Activated T-helper 2 cell treated with anti-CD3 and anti-CD28 coated beads, Interferon-gamma antibody, Interleukin-2, Interleukin-4, amounts not matched to agents 10 μg/mL and 5 μg/mL and 100 μg/mL, durations not matched to agents 14 hours and 24 hours and 36 hours (primary cell): ENCODE measurements at regions of chr1 and their contacts with region 1.

Region 1: GRCh38 chr1:110879758-110880606 is 7.0 kb downstream of the CD53 start:
- DNase-seq: peak; percentile 65
- H3K4me3 Mint-ChIP-seq: peak overlapping the region; percentile 84
- H3K27ac Mint-ChIP-seq: peak overlapping the region; percentile 100
- H3K4me1 Mint-ChIP-seq: peaks cover 75% of the 10 kb centered on the region
- H3K27me3 Mint-ChIP-seq: no peaks in the 10 kb centered on the region

Region 2: DNA sequence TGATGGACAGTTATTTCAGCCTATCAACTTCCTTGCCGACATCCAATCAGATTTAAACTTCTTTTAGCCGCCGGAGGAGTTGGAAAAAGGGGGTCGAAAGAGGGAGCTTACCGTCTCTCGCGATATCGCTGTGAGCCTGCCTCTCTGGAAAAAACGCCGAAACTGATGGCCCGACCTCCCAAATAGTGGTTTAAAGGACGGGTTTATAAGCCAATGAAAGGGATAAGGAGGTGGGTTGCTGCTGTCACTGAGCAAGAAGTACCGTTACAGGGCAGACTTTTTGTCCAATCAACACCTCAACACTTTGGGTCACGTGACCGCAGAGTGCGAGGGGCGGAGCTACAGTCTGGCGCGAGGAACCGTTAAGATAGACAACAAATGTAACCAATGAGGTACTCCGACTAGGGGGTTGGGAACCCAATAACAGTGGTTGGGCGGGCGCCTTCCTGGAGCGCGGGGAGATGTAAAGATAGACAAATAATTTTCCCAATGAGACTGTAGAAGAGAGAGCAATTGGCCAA is 541.0 kb before region 1 on chr1 and contains the start of gene RBM15:
- intact Hi-C with region 1: loop called (anchors 5 kb)
- DNase-seq: peak; percentile 98
- H3K4me3 Mint-ChIP-seq: no peak within 1 kb of the TSS
- H3K27ac Mint-ChIP-seq: no peak within 1 kb of the TSS
- H3K4me1 Mint-ChIP-seq: peaks cover 52% of the 10 kb centered on the region
- H3K27me3 Mint-ChIP-seq: no peaks in the 10 kb centered on the region
- total RNA-seq, gene RBM15: 55.5 TPM in 2 replicates

Region 3: DNA sequence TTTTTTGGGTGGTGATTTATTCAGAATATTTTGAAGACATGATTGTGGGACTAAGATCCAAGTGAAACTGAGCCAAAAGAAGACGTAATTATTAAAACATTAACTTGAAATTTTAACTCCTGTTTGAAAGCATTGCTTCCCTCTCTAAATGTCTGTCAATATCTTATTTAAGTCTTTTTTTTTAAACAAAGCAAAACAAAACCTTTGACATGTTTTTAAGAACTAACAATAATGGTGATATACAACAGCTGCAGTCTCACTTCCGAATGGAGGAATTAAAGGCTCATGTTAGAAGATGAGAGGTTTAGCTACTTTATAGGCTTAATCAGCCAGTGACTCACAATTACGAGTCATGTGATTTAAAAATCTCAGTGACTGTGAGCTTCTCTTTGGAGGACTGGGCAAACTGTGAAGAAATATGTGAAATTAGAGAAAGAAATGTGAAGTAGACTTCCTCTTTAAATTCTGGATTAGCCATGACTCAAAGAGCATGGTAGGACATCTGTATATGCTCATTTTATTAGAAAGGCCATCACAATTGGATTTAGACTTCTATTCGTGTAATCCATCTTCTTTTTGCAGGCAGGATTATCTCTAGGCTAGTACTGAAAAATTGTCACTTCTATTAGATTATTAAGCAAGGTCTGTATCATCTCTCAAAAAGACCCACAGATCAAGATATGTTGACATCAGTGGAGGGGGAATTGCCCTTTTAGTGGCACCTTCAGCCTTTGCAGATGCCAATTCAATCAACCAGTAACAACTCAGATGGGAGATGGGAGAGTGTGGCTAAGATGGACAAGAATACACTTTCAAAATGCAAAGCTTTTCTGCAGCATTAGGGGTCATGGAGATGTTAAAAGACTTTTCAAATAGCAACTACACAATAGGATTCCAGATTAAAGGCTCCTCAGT is 233.9 kb before region 1 on chr1:
- intact Hi-C with region 1: loop called (anchors 5 kb)
- DNase-seq: no peak
- H3K4me3 Mint-ChIP-seq: peak overlapping the region; percentile 49
- H3K27ac Mint-ChIP-seq: peak overlapping the region; percentile 77
- H3K4me1 Mint-ChIP-seq: peaks cover 53% of the 10 kb centered on the region
- H3K27me3 Mint-ChIP-seq: no peaks in the 10 kb centered on the region

Region 4: DNA sequence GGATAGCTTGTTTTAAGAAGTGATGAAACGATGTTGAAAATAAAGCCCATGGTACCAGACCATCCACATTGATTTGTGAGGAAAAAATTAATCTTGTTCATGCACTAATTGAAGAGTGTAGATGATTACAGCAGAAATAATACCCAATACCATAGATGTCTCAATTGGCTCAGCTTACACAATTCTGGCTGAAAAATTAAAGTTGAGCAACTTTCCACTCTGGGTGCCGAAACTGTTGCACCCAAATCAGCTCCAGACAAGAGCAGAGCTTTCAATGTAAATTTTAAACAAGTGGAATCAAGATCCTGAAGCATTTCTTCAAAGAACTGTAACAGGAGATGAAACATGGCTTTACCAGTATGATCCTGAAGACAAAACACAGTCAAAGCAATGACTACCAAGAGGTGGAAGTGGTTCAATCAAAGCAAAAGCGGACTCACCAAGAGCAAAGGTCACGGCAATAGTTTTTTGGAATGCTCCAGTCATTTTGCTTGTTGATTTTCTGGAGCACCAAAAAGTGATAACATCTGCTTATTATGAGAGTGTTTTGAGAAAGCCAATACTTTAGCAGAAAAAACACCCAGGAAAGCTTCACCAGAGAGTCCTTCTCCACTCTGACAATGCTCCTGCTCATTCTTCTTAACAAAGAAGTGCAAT is 189.1 kb before region 1 on chr1:
- intact Hi-C with region 1: no loop called
- DNase-seq: no peak
- H3K4me3 Mint-ChIP-seq: no peak overlapping the region
- H3K27ac Mint-ChIP-seq: no peak overlapping the region
- H3K4me1 Mint-ChIP-seq: peaks cover 5% of the 10 kb centered on the region
- H3K27me3 Mint-ChIP-seq: peaks cover 14% of the 10 kb centered on the region

Region 5: DNA sequence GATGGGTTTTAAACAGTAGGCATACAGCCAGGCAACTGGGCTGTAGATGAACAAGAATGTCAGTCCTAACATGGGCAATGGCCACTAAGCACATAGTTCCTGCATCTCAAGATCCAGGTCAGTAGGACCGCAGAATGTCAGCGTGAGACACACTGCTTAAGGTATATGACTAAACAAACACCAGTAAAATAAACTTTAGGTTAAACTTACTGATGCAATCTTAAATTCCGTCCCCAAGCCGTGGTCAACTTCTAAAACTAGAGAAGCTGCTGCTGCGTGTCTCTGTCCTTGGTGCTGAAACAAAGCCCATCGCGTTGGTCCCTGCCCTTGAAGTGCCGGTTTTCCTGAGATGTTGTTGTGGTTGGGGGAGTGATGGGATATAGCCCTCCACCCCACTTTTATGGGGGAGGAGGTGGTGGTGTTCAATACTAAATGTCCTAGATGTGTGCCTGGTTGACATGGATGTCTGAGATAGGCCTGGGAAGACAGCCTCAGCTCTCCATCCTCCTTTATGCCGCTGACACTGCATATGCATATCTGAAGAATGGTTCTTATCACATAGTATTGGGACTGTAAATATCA is 133.3 kb before region 1 on chr1:
- intact Hi-C with region 1: no loop called
- DNase-seq: peak; percentile 29
- H3K4me3 Mint-ChIP-seq: no peak overlapping the region
- H3K27ac Mint-ChIP-seq: no peak overlapping the region
- H3K4me1 Mint-ChIP-seq: peaks cover 4% of the 10 kb centered on the region
- H3K27me3 Mint-ChIP-seq: peaks cover 45% of the 10 kb centered on the region

Region 6: DNA sequence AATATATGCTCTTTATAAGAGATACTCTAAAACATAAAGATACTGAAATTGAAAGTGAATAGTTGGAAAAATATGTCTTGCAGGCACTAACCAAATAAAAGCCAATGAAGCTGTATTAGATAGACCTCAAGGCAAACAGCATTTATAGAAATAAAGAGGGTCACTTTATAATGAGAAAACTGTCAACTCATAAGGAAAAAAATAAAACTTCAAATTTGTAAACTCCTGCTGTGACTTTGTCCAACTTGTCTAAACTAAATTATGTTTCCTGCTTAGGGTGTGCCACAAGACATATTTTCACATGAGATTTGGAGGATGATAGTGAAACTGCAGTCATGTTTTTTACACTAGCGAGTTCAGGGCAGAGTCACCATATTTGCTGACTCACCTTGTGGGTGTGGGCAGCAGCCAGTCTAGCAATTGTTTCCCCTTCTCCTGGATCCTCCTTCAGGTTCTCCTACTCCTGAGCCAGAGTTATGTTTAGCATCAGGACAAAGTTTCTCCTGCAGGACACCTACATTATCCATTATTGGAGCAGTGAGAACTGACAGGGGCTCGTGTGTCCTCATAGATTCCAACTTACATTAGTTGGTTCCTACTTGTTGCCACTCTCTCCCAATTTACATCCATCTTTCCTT is 36.8 kb after region 1 on chr1:
- intact Hi-C with region 1: loop called (anchors 2 kb)
- DNase-seq: peak; percentile 40
- H3K4me3 Mint-ChIP-seq: peak overlapping the region; percentile 42
- H3K27ac Mint-ChIP-seq: peak overlapping the region; percentile 13
- H3K4me1 Mint-ChIP-seq: peaks cover 19% of the 10 kb centered on the region
- H3K27me3 Mint-ChIP-seq: no peaks in the 10 kb centered on the region

Region 7: DNA sequence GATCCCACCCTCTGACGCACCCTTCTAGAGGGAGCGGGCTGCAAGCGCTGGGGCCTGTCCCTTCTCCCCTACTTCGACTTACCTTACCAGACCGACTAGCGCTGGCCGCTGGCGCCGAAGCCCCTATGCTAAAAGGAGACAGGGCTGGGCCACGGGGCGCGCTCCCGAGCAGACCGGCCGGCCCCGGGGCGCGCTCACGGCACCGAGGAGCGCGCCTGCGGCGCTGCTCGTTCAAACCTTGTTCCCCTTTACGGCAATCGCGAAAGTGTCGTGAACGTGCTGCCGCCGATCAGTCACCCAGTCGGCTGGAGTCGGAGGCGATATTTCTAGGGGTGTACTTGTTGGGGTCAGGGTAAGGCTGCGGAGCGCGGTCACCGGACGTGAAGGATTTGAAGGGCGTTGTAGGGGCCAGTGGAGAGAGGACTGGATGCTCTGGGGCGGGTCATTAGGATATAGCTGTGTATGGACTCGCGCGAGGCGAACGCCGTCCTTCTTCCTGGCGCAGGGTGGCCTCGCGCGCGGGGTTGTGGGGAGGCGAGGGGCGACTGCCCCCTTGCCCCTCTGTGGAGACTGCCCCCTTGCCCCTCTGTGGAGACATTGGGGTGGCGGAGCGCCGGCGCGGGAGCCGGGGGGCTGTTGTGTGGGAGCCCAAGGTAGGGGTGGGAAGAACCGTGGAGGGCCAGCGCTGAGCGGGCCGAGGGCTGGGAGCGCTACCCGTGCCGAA is 260.1 kb after region 1 on chr1 and contains the starts of genes CEPT1 and DRAM2:
- intact Hi-C with region 1: loop called (anchors 5 kb)
- DNase-seq: peak; percentile 91
- H3K4me3 Mint-ChIP-seq: peak within 1 kb of the TSS; percentile 96
- H3K27ac Mint-ChIP-seq: peak within 1 kb of the TSS; percentile 92
- H3K4me1 Mint-ChIP-seq: peaks cover 36% of the 10 kb centered on the region
- H3K27me3 Mint-ChIP-seq: no peaks in the 10 kb centered on the region
- total RNA-seq, gene CEPT1: 29.8 and 34.8 TPM in 2 replicates
- total RNA-seq, gene DRAM2: 22.9 and 24.7 TPM in 2 replicates

Region 8: GRCh38 chr1:111222308-111223125 is 342.5 kb after region 1 on chr1:
- intact Hi-C with region 1: loop called (anchors 5 kb)
- DNase-seq: peak; percentile 70
- H3K4me3 Mint-ChIP-seq: peak overlapping the region; percentile 78
- H3K27ac Mint-ChIP-seq: peak overlapping the region; percentile 93
- H3K4me1 Mint-ChIP-seq: peaks cover 84% of the 10 kb centered on the region
- H3K27me3 Mint-ChIP-seq: no peaks in the 10 kb centered on the region

Region 9: GRCh38 chr1:111937101-111937725 is 1057.2 kb after region 1 on chr1:
- intact Hi-C with region 1: no loop called
- DNase-seq: no peak
- H3K4me3 Mint-ChIP-seq: no peak overlapping the region
- H3K27ac Mint-ChIP-seq: no peak overlapping the region
- H3K4me1 Mint-ChIP-seq: peaks cover 2% of the 10 kb centered on the region
- H3K27me3 Mint-ChIP-seq: peaks cover 5% of the 10 kb centered on the region